ENCODE measurements at regions of chr2 and their contacts with region 1.

Region 1: DNA sequence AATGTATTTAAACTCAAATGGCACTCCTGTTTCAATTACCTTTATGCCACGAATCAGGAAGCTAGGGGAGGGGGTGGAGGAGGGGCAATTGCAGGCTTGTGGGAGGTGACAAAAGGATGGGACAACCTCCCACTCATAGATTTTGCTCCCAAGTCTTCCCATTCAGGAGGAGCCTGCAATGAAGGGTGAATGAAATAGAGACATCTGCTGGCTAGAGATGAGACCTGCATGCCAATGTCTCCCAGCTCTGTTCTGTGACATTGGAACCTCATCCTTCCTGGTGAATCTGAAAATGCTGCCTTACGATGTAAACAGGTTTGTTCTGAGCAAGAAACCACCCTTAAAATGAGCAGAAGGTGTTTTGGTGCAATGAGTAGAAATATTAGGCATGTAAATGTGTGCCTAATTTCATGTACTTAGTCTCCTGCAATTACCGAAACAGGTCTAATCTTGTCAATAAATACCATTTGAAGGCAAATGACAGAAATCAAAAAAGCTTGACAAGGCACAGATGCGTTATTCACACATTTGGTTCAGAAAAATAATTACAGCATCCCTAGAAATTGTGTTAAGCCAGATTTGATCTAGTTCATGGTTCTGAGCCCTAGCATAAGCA is 2.7 kb upstream of the PID1 start:
- DNase-seq: no peak
- ATAC-seq: peak; percentile 80

Region 2: GRCh38 chr2:227890495-227891079 is 1383.2 kb before region 1 on chr2:
- intact Hi-C with region 1: loop called (anchors 5 kb)
- DNase-seq: no peak
- ATAC-seq: peak; percentile 62

Region 3: DNA sequence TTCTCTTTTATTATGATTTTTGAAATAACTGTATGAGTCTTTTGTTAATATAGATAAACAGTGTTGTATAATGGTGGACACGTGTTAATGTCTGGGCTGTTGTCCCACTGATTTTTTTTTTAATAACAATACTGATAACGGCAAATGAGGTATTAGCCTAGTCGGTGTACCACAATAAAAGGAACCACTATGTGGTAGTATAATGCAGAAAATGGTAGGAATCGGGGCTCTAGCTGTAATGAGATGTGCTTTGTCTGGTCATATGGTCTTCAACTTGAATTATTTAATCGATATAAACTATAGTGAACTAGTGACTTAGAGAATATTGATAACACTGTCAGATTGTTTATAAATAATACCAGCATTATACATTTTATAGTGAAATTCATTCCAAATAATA is 574.4 kb before region 1 on chr2:
- intact Hi-C with region 1: loop called (anchors 5 kb)
- DNase-seq: no peak
- ATAC-seq: peak; percentile 83

Region 4: GRCh38 chr2:229133155-229133772 is 140.6 kb before region 1 on chr2:
- intact Hi-C with region 1: loop called (anchors 1 kb)
- DNase-seq: no peak
- ATAC-seq: peak; percentile 52

Measured in Right ventricle myocardium inferior (tissue), 1 donor.